CD8-positive, alpha-beta T cell (primary cell): ENCODE measurements at regions of chr16 and their contacts with region 1.

Region 1: GRCh38 chr16:55465077-55465896 is 13.7 kb upstream of the MMP2 start:
- DNase-seq: peak; percentile 56 to 85 (median 82)
- ATAC-seq: peak; percentile 95
- H3K4me3 ChIP-seq: no peak overlapping the region
- H3K4me3 Mint-ChIP-seq: no peak overlapping the region
- H3K27ac ChIP-seq: no peak overlapping the region
- H3K27ac Mint-ChIP-seq: no peak overlapping the region
- H3K4me1 ChIP-seq: no peaks in the 10 kb centered on the region
- H3K4me1 Mint-ChIP-seq: no peaks in the 10 kb centered on the region
- H3K27me3 ChIP-seq: no peaks in the 10 kb centered on the region
- H3K27me3 Mint-ChIP-seq: no peaks in the 10 kb centered on the region
- CTCF ChIP-seq: peak; percentile 96

Region 2: GRCh38 chr16:53945996-53946395 is 1519.3 kb before region 1 on chr16:
- CTCF ChIA-PET with region 1: no interaction called
- POLR2A ChIA-PET with region 1: no interaction called
- intact Hi-C with region 1: loop called in 1 of 2 experiments (anchors 10 kb)
- DNase-seq: peak in 2 of 9 experiments; percentile 19 to 34
- ATAC-seq: no peak
- H3K4me3 ChIP-seq: no peak overlapping the region
- H3K4me3 Mint-ChIP-seq: no peak overlapping the region
- H3K27ac ChIP-seq: no peak overlapping the region
- H3K27ac Mint-ChIP-seq: no peak overlapping the region
- H3K4me1 ChIP-seq: no peaks in the 10 kb centered on the region
- H3K4me1 Mint-ChIP-seq: peaks cover 7% of the 10 kb centered on the region
- H3K27me3 ChIP-seq: no peaks in the 10 kb centered on the region
- H3K27me3 Mint-ChIP-seq: no peaks in the 10 kb centered on the region
- CTCF ChIP-seq: no peak

Region 3: DNA sequence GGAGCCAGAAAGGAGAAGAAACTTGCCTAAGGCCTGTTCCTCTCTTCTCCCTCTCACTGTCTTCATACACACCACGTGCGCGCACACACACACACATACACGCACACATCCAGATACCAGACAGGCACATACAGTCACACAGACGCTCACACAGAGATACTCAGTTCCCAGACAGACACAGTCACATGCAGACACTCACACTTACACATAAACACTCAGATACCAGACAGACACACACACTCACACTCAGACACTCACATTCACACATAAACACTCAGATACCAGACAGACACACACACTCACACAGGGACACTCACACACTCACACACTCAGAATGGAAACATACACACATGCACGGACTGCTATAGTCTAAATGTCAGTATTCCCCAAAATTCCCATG is 10.4 kb before region 1 on chr16:
- CTCF ChIA-PET with region 1: interaction called, 13 read pairs
- POLR2A ChIA-PET with region 1: no interaction called
- intact Hi-C with region 1: no loop called
- DNase-seq: no peak
- ATAC-seq: no peak
- H3K4me3 ChIP-seq: no peak overlapping the region
- H3K4me3 Mint-ChIP-seq: no peak overlapping the region
- H3K27ac ChIP-seq: no peak overlapping the region
- H3K27ac Mint-ChIP-seq: no peak overlapping the region
- H3K4me1 ChIP-seq: no peaks in the 10 kb centered on the region
- H3K4me1 Mint-ChIP-seq: no peaks in the 10 kb centered on the region
- H3K27me3 ChIP-seq: no peaks in the 10 kb centered on the region
- H3K27me3 Mint-ChIP-seq: peaks cover 5% of the 10 kb centered on the region
- CTCF ChIP-seq: no peak

Region 4: GRCh38 chr16:55701442-55702319 is 236.4 kb after region 1 on chr16:
- CTCF ChIA-PET with region 1: interaction called, 6 read pairs
- POLR2A ChIA-PET with region 1: no interaction called
- intact Hi-C with region 1: loop called (anchors 1 to 2 kb)
- DNase-seq: peak in 4 of 9 experiments; percentile 18 to 44 (median 28)
- ATAC-seq: no peak
- H3K4me3 ChIP-seq: no peak overlapping the region
- H3K4me3 Mint-ChIP-seq: no peak overlapping the region
- H3K27ac ChIP-seq: no peak overlapping the region
- H3K27ac Mint-ChIP-seq: no peak overlapping the region
- H3K4me1 ChIP-seq: no peaks in the 10 kb centered on the region
- H3K4me1 Mint-ChIP-seq: no peaks in the 10 kb centered on the region
- H3K27me3 ChIP-seq: peaks cover 0 to 2% of the 10 kb centered on the region in 2 experiments
- H3K27me3 Mint-ChIP-seq: peaks cover 2% of the 10 kb centered on the region
- CTCF ChIP-seq: no peak

Region 5: GRCh38 chr16:55842369-55843104 is 377.2 kb after region 1 on chr16:
- CTCF ChIA-PET with region 1: interaction called, 5 read pairs
- POLR2A ChIA-PET with region 1: no interaction called
- intact Hi-C with region 1: loop called in 1 of 2 experiments (anchors 2 kb)
- DNase-seq: peak in 5 of 9 experiments; percentile 5 to 61 (median 17)
- ATAC-seq: no peak
- H3K4me3 ChIP-seq: no peak overlapping the region
- H3K4me3 Mint-ChIP-seq: no peak overlapping the region
- H3K27ac ChIP-seq: no peak overlapping the region
- H3K27ac Mint-ChIP-seq: no peak overlapping the region
- H3K4me1 ChIP-seq: no peaks in the 10 kb centered on the region
- H3K4me1 Mint-ChIP-seq: no peaks in the 10 kb centered on the region
- H3K27me3 ChIP-seq: no peaks in the 10 kb centered on the region
- H3K27me3 Mint-ChIP-seq: peaks cover 14% of the 10 kb centered on the region
- CTCF ChIP-seq: peak; percentile 68

Region 6: DNA sequence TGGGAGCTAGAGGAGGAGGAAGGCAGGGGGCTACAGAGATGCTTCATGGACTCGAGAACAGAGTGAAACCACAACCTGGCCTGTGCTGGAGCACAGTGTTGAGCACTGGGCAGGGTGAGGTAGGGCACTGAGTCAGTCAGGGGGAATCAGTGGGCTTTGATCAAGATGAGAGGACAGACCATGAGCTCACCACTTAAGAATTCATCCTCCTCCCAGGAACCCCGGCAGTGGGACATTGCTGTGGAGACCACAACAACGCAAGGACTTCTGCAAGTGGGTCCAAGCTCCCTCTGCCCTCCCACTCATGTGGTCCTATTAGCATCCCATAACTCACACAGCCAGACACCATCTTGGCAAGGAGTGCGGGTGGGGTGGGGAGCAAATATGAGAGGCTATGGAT is 411.6 kb after region 1 on chr16:
- CTCF ChIA-PET with region 1: no interaction called
- POLR2A ChIA-PET with region 1: no interaction called
- intact Hi-C with region 1: no loop called
- DNase-seq: no peak
- ATAC-seq: no peak
- H3K4me3 ChIP-seq: no peak overlapping the region
- H3K4me3 Mint-ChIP-seq: no peak overlapping the region
- H3K27ac ChIP-seq: no peak overlapping the region
- H3K27ac Mint-ChIP-seq: no peak overlapping the region
- H3K4me1 ChIP-seq: no peaks in the 10 kb centered on the region
- H3K4me1 Mint-ChIP-seq: no peaks in the 10 kb centered on the region
- H3K27me3 ChIP-seq: peaks cover 0 to 2% of the 10 kb centered on the region in 2 experiments
- H3K27me3 Mint-ChIP-seq: no peaks in the 10 kb centered on the region
- CTCF ChIP-seq: no peak

Region 7: GRCh38 chr16:56356276-56357240 is 891.3 kb after region 1 on chr16:
- CTCF ChIA-PET with region 1: no interaction called
- POLR2A ChIA-PET with region 1: no interaction called
- intact Hi-C with region 1: loop called in 1 of 2 experiments (anchors 2 kb)
- DNase-seq: peak; percentile 33 to 76 (median 54)
- ATAC-seq: peak; percentile 75
- H3K4me3 ChIP-seq: peak overlapping the region; percentile 55 to 60
- H3K4me3 Mint-ChIP-seq: peak overlapping the region; percentile 87
- H3K27ac ChIP-seq: peak overlapping the region; percentile 43 to 48
- H3K27ac Mint-ChIP-seq: peak overlapping the region; percentile 88
- H3K4me1 ChIP-seq: peaks cover 8% of the 10 kb centered on the region
- H3K4me1 Mint-ChIP-seq: peaks cover 21% of the 10 kb centered on the region
- H3K27me3 ChIP-seq: no peaks in the 10 kb centered on the region
- H3K27me3 Mint-ChIP-seq: no peaks in the 10 kb centered on the region
- CTCF ChIP-seq: peak; percentile 66